GM23248 (cell line): ENCODE measurements at regions of chr10 and their contacts with region 1.

Region 1: GRCh38 chr10:90905925-90906324 is 15.0 kb downstream of the ANKRD1 start:
- DNase-seq: no peak
- H3K4me3 ChIP-seq: no peak overlapping the region
- H3K27ac ChIP-seq: no peak overlapping the region
- H3K4me1 ChIP-seq: no peaks in the 10 kb centered on the region
- H3K27me3 ChIP-seq: no peaks in the 10 kb centered on the region

Region 2: DNA sequence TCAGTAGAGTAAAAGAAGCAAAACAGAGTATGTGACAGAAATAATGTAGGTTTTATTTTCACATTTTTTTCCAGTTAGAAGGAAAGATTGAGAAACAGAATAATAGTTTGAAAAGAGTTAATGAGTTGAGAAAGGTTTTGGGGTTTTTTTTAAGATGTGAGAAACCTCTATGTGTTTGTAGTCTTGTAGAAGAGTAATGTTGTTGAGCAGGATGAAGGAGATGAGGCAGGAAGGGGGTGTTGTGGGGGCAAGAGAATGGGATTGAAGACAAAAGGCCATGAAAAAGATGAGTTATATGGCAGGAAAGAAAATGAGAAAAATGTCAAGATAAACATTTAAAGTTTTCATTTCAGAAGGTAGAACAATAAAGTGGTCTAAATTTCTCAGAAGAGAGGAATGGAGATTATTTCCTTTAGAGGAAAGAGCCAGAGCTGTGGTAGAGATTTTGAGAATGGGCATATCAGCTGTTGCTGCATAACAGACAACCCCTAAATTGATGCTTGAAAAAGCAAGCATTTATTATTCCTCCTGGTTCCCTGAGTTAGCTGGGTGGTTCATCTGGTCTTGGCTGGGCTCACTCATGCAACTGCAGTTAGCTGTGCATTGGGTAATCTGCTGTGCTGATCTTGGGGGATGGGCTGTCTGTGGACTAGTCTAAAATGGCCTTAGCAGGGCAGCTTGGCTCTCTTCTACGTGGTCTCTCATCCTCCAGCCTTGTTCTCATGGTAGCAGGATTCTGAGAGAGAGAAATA is 341.6 kb after region 1 on chr10:
- in situ Hi-C with region 1: loop called (anchors 10 kb)
- DNase-seq: peak; percentile 57
- H3K4me3 ChIP-seq: no peak overlapping the region
- H3K27ac ChIP-seq: no peak overlapping the region; the same call in 1 of the 2 replicates
- H3K4me1 ChIP-seq: peaks cover 8% of the 10 kb centered on the region
- H3K27me3 ChIP-seq: no peaks in the 10 kb centered on the region

Region 3: GRCh38 chr10:91409869-91410637 is 504.1 kb after region 1 on chr10 and contains the start of gene HECTD2:
- in situ Hi-C with region 1: no loop called
- DNase-seq: peak; percentile 94
- H3K4me3 ChIP-seq: peak within 1 kb of the TSS; percentile 81
- H3K27ac ChIP-seq: peak within 1 kb of the TSS; percentile 96
- H3K4me1 ChIP-seq: peaks cover 25% of the 10 kb centered on the region
- H3K27me3 ChIP-seq: no peaks in the 10 kb centered on the region
- total RNA-seq, gene HECTD2: 14.8 and 19.6 TPM in 2 replicates